CD8-positive, alpha-beta T cell (primary cell): ENCODE measurements at regions of chr19 and their contacts with region 1.

Region 1: DNA sequence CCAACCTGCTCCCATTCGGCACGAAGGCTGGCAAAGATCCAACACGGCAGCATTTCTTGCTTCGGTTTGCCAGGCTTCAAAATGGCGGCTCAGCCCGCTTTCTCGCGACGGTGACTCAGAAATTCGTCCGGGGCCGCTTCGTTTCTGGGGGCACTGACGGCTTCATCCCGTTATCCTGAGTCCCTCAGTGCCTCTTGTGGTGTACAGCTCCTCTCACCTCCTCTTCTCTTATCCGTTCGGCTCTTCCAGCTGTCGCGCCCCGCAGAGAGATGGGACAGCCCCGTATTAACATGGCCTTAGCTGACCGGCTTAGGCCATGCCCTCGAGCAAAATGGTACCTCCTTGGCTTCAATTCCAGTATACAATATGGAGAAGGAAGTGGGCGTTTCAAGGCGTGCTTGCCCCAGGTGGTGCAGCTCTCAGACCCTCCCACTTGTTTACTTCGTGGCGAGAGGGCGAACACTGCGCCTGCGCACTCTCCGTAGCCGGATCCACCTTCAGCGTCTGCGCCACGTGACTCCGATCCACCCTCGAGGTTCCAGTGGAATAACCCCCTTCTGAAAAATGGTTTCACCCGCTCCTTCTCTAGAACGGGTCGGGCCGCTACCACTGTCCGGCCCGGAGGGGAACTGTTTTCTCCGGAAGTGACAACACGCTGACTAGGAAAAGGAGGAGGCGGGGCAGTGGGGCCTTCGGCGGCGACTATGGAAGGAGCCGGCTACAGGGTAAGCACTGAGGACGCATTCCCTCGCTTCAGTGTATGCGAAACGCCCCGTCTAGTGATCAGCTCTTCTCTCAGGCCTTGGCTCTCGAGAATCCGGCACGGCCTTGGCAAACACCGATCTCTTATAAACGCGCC is at the starts of genes AKT1S1 and TBC1D17:
- DNase-seq: peak; percentile 96 to 100 (median 97)
- ATAC-seq: peak; percentile 60
- H3K4me3 ChIP-seq: peak within 1 kb of the TSS; percentile 88 to 97
- H3K4me3 Mint-ChIP-seq: no peak within 1 kb of the TSS
- H3K27ac ChIP-seq: peak within 1 kb of the TSS; percentile 97 to 98
- H3K27ac Mint-ChIP-seq: no peak within 1 kb of the TSS
- H3K4me1 ChIP-seq: peaks cover 22% of the 10 kb centered on the region
- H3K4me1 Mint-ChIP-seq: peaks cover 29% of the 10 kb centered on the region
- H3K27me3 ChIP-seq: no peaks in the 10 kb centered on the region
- H3K27me3 Mint-ChIP-seq: no peaks in the 10 kb centered on the region
- CTCF ChIP-seq: no peak
- total RNA-seq, gene AKT1S1: 12.6 to 14.1 TPM
- total RNA-seq, gene TBC1D17: 31.1 to 31.2 TPM

Region 2: DNA sequence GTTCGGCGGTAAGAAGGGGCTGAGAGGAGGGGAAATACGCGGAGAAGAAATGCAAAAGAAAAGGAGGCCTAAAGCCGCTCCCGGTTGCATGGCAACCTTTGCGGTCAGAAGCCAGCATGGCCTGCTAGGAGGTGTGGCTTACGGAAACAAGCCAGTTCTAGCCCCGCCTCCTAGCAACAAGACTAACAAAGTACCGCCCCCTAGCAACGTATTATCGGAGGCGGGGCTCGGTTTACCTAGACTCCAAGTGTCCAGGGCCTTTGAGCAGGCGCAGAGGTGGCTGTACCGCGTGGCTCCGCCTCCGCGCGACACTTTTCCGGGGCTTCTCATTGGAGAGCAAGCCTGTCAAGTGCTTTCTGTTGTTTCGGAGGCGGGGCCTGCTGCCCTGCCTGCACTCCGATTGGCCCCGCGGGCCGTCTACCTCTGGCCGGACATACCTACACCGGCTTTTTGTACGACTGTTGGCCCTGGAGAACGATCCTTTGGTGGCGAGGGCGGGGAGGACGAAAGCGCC is 1408.4 kb before region 1 on chr19:
- CTCF ChIA-PET with region 1: no interaction called
- POLR2A ChIA-PET with region 1: no interaction called
- intact Hi-C with region 1: loop called in 1 of 2 experiments (anchors 2 kb)
- DNase-seq: peak; percentile 98 to 100 (median 99)
- ATAC-seq: peak; percentile 85
- H3K4me3 ChIP-seq: peak overlapping the region; percentile 83 to 95
- H3K4me3 Mint-ChIP-seq: peak overlapping the region; percentile 90
- H3K27ac ChIP-seq: peak overlapping the region; percentile 75 to 90
- H3K27ac Mint-ChIP-seq: peak overlapping the region; percentile 85
- H3K4me1 ChIP-seq: peaks cover 15% of the 10 kb centered on the region
- H3K4me1 Mint-ChIP-seq: peaks cover 21% of the 10 kb centered on the region
- H3K27me3 ChIP-seq: no peaks in the 10 kb centered on the region
- H3K27me3 Mint-ChIP-seq: no peaks in the 10 kb centered on the region
- CTCF ChIP-seq: no peak

Region 3: DNA sequence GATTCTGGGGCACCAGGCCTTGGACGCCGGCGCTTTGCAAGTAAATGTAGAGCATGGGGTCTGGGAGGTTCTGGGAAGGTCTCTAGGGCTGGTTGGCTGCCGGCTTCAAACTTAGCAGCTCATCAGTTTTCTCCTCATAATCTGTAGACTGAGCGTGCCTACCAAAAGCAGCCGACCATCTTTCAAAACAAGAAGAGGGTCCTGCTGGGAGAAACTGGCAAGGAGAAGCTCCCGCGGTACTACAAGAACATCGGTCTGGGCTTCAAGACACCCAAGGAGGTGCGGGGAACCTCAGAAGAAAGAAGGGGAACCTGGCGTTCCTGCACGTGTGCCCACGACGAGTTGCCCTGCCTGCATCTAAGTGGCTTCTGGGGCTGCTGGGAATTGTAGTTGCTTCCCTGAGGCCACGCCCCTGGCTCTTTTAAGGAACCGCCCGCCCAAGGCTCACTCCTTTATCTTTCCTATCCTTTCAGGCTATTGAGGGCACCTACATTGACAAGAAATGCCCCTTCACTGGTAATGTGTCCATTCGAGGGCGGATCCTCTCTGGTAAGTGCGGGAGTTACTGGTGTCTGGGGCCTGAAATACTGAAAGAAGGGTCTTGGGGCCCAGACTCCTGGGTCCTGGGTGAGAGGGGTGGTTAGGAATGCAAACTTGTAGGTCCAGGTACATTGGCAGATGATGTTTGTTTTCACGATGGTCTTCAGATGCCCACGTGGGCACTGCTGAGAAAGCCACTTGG is 380.0 kb before region 1 on chr19:
- CTCF ChIA-PET with region 1: no interaction called
- POLR2A ChIA-PET with region 1: interaction called, 6 read pairs
- intact Hi-C with region 1: loop called (anchors 1 kb)
- DNase-seq: peak; percentile 54 to 91 (median 78)
- ATAC-seq: peak; percentile 9
- H3K4me3 ChIP-seq: peak overlapping the region; percentile 95 to 96
- H3K4me3 Mint-ChIP-seq: peak overlapping the region; percentile 100
- H3K27ac ChIP-seq: peak overlapping the region; percentile 95 to 98
- H3K27ac Mint-ChIP-seq: peak overlapping the region; percentile 98
- H3K4me1 ChIP-seq: peaks cover 39% of the 10 kb centered on the region
- H3K4me1 Mint-ChIP-seq: peaks cover 59% of the 10 kb centered on the region
- H3K27me3 ChIP-seq: no peaks in the 10 kb centered on the region
- H3K27me3 Mint-ChIP-seq: no peaks in the 10 kb centered on the region
- CTCF ChIP-seq: no peak

Region 4: DNA sequence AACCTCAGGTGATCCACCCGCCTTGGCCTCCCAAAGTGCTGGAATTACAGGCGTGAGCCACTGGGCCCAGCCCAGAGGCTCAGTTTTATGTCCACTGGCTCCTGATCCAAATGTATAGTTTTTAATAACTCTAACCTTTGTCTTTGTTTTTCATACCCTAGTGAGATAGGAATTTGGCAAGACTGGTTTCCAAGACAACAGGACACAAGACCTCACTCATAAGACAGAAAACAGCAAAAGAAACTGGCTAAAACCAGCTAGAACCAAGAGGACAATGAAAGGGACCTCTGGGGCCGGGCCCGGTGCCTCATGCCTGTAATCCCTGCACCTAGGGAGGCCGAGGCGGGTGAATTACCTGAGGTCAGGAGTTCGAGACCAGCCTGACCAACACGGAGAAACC is 158.7 kb before region 1 on chr19:
- CTCF ChIA-PET with region 1: no interaction called
- POLR2A ChIA-PET with region 1: interaction called, 5 read pairs
- intact Hi-C with region 1: loop called in 1 of 2 experiments (anchors 2 kb)
- DNase-seq: no peak
- ATAC-seq: no peak
- H3K4me3 ChIP-seq: no peak overlapping the region
- H3K4me3 Mint-ChIP-seq: peak overlapping the region; percentile 92
- H3K27ac ChIP-seq: no peak overlapping the region
- H3K27ac Mint-ChIP-seq: peak overlapping the region; percentile 14
- H3K4me1 ChIP-seq: peaks cover 4% of the 10 kb centered on the region
- H3K4me1 Mint-ChIP-seq: peaks cover 14% of the 10 kb centered on the region
- H3K27me3 ChIP-seq: no peaks in the 10 kb centered on the region
- H3K27me3 Mint-ChIP-seq: no peaks in the 10 kb centered on the region
- CTCF ChIP-seq: no peak

Region 5: DNA sequence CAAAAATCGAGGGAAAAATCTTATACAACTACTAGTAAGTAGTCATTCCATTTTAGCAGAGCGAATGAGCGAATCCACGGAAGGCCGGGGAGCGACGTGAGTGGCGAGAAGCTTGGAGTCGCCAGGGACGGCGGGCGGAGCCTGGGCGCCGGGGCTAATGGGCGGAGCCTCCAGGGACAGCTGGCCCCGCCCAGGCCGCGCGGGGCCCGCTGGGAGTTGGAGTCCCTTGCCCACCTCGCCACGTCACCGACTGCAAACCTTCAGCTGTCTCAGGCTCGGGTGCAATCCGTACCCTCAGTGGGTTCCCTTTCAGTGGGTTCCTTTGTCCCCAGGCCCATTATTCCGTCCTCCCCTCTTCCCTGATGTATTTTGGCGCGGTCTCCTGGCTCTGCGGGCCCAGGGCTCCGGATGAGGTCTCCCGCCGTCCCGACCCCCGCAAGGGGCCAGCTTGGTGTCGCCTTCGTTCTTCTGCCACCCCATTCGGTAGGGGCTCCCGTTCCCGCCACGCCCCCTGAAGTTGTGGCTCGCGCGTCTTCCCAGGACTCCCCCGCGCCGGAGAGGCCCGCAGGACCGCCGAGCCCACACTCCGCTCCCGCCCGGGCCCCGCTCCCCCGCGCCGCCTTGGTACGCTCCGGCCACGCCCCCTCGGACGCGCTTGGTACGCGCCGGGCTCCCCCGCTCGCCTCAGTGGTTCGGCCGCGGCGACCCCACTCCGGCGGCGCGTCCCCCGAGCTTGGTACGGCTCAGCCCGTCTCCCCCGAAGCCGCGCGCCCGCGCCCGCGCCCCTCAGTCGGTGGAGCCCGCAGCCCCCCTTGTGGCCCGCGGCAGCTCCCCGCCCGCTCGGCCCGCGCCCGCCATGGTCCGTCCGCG is 26.5 kb before region 1 on chr19 and contains the start of gene PTOV1:
- CTCF ChIA-PET with region 1: no interaction called
- POLR2A ChIA-PET with region 1: interaction called, 23 read pairs
- intact Hi-C with region 1: loop called (anchors 1 kb)
- DNase-seq: peak; percentile 73 to 94 (median 86)
- ATAC-seq: peak; percentile 87
- H3K4me3 ChIP-seq: peak within 1 kb of the TSS; percentile 98 to 99
- H3K4me3 Mint-ChIP-seq: peak within 1 kb of the TSS; percentile 93
- H3K27ac ChIP-seq: peak within 1 kb of the TSS; percentile 96 to 99
- H3K27ac Mint-ChIP-seq: peak within 1 kb of the TSS; percentile 96
- H3K4me1 ChIP-seq: peaks cover 30% of the 10 kb centered on the region
- H3K4me1 Mint-ChIP-seq: peaks cover 35% of the 10 kb centered on the region
- H3K27me3 ChIP-seq: no peaks in the 10 kb centered on the region
- H3K27me3 Mint-ChIP-seq: no peaks in the 10 kb centered on the region
- CTCF ChIP-seq: no peak
- total RNA-seq, gene PTOV1: 112 to 116 TPM

Region 6: DNA sequence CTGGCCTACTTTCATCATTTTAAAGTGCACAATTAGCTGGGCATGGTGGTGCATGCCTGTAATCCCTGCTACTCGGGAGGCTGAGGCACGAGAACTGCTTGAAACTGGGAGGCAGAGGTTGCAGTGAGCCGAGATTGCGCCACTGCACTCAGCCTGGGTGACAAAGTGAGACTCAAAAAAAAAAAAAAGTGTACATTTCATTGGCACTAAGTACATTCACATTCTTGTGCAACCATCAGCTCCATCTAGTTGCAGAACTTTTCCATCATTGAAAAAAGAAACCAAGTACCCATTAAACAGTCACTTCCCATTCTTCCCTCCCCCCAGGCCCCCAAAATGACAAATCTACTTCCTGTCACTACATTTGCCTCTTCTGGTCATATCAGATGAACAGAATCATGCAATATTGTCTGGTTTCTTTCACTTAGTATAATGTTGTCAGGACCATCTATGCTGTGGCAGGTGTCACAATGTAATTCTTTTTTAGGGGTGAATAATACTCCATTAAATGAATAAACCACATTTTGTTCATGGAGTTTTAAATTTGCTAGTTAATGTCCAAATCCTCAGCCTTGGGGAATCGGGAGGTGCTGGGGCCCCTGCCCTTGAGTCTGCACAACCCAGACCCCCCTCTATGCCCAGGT is 91.2 kb after region 1 on chr19:
- CTCF ChIA-PET with region 1: no interaction called
- POLR2A ChIA-PET with region 1: no interaction called
- intact Hi-C with region 1: no loop called
- DNase-seq: no peak
- ATAC-seq: no peak
- H3K4me3 ChIP-seq: no peak overlapping the region
- H3K4me3 Mint-ChIP-seq: no peak overlapping the region
- H3K27ac ChIP-seq: no peak overlapping the region
- H3K27ac Mint-ChIP-seq: no peak overlapping the region
- H3K4me1 ChIP-seq: no peaks in the 10 kb centered on the region
- H3K4me1 Mint-ChIP-seq: no peaks in the 10 kb centered on the region
- H3K27me3 ChIP-seq: peaks cover 0 to 10% of the 10 kb centered on the region in 2 experiments
- H3K27me3 Mint-ChIP-seq: peaks cover 16% of the 10 kb centered on the region
- CTCF ChIP-seq: no peak

Region 7: DNA sequence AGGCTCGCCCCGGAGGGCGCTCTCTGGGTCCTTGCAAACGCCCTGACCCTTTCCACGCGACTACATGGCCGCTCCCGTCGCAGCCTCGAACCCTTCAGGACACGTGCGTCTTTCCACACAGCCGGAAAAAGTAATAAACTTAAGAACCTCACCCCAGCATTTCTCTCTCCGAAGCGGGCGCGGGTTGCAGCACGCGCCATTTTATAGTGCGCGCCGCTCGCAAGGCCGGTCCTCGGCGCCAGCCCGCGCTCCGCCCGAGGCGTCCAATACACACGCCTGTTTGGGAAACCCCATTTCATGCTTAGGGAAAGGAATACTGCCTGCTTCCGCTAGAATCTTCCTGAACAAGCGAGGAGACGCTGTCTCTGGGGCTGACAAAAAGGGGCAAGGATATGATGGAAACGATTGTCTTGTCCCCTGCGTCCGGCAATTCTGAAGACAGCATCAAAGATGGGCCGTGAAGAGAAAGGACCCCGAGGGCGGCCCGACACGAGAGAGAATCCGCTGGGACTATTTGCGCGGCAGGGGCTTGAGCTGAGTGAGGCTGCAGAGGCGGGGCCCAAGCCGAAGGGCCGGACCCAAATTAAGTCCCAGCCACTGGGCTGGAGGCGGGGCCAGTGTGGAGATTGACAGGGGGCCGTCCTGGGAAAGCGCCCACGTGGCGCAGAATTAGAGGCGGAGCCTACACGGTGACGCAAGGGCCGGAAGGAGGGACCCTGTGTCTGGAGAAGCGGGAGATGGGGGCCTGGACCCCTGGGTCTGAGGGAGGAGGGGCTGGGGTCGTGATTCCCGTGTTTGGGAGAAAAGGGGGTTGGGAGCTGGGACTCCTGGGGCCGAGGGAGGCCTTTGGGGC is 927.4 kb after region 1 on chr19:
- CTCF ChIA-PET with region 1: no interaction called
- POLR2A ChIA-PET with region 1: no interaction called
- intact Hi-C with region 1: loop called in 1 of 2 experiments (anchors 5 kb)
- DNase-seq: peak; percentile 91 to 99 (median 96)
- ATAC-seq: peak; percentile 95
- H3K4me3 ChIP-seq: peak overlapping the region; percentile 91 to 96
- H3K4me3 Mint-ChIP-seq: peak overlapping the region; percentile 98
- H3K27ac ChIP-seq: peak overlapping the region; percentile 99
- H3K27ac Mint-ChIP-seq: peak overlapping the region; percentile 100
- H3K4me1 ChIP-seq: peaks cover 18% of the 10 kb centered on the region
- H3K4me1 Mint-ChIP-seq: peaks cover 43% of the 10 kb centered on the region
- H3K27me3 ChIP-seq: no peaks in the 10 kb centered on the region
- H3K27me3 Mint-ChIP-seq: no peaks in the 10 kb centered on the region
- CTCF ChIP-seq: no peak